Activated naive CD8-positive, alpha-beta T cell treated with anti-CD3 and anti-CD28 coated beads, Interleukin-2, amount 10 ng/mL, durations not matched to agents 7 days and 5 days (primary cell): ENCODE measurements at regions of chr17 and their contacts with region 1.

Region 1: GRCh38 chr17:46193626-46194392 is 580 bp upstream of the KANSL1 start:
- DNase-seq: peak; percentile 94
- ATAC-seq: peak; percentile 75
- H3K4me3 Mint-ChIP-seq: peak overlapping the region; percentile 93
- H3K27ac Mint-ChIP-seq: peak overlapping the region; percentile 97
- H3K4me1 Mint-ChIP-seq: peaks cover 51% of the 10 kb centered on the region
- H3K27me3 Mint-ChIP-seq: no peaks in the 10 kb centered on the region

Region 2: DNA sequence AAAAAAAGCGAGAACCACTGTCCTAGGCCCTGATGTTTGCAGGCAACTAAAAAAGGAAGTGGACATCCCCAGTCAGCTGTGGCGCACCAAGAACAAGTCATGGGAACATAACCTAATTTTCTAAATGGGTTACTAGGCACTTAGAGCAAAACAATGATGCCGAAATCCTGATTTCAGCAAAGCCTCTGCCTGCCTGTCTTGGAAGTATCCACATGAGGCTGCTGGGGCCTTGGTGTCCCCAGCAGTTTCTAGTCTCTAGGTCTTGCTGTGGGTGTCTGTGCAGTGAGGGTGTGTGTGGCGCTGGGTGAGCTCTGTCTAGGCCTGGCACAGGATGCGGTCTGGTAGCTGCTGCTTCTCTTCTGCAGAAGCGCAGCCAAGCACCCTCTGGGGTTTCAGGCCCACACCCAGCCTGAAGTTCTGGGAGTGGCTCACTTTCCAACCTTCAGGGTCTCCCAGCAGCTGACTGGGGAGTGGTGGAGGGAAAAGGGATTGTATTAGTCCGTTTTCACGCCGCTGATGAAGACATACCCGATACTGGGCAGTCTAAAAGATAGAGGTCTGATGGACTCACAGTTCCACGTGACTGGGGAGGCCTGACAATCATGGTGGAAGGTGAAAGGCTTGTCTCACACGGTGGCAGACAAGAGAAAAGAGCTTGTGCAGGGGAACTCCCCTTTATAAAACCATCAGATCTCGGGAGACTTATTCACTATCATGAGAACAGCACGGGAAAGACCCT is 173.6 kb before region 1 on chr17:
- POLR2A ChIA-PET with region 1: no interaction called
- DNase-seq: no peak
- ATAC-seq: peak; percentile 96
- H3K4me3 Mint-ChIP-seq: peak overlapping the region; percentile 22
- H3K27ac Mint-ChIP-seq: peak overlapping the region; percentile 86
- H3K4me1 Mint-ChIP-seq: peaks cover 7% of the 10 kb centered on the region
- H3K27me3 Mint-ChIP-seq: no peaks in the 10 kb centered on the region

Region 3: GRCh38 chr17:46179375-46179999 is 14.3 kb before region 1 on chr17:
- POLR2A ChIA-PET with region 1: interaction called, 21 read pairs
- DNase-seq: no peak
- ATAC-seq: peak; percentile 69
- H3K4me3 Mint-ChIP-seq: peak overlapping the region; percentile 74
- H3K27ac Mint-ChIP-seq: peak overlapping the region; percentile 69
- H3K4me1 Mint-ChIP-seq: peaks cover 68% of the 10 kb centered on the region
- H3K27me3 Mint-ChIP-seq: no peaks in the 10 kb centered on the region

Region 4: GRCh38 chr17:46212634-46213435 is 19.0 kb after region 1 on chr17:
- POLR2A ChIA-PET with region 1: interaction called, 26 read pairs
- DNase-seq: no peak
- ATAC-seq: peak; percentile 76
- H3K4me3 Mint-ChIP-seq: no peak overlapping the region
- H3K27ac Mint-ChIP-seq: no peak overlapping the region
- H3K4me1 Mint-ChIP-seq: peaks cover 23% of the 10 kb centered on the region
- H3K27me3 Mint-ChIP-seq: no peaks in the 10 kb centered on the region